Esophagus squamous epithelium (tissue), 5 donors: ENCODE measurements at regions of chr1 and their contacts with region 1.

Region 1: GRCh38 chr1:15741183-15741850 is 982 bp upstream of the TMEM82 start:
- DNase-seq: no peak
- H3K4me3 ChIP-seq: no peak overlapping the region
- H3K27ac ChIP-seq: peak overlapping the region in 2 of 4 donors; percentile 46 to 48
- H3K4me1 ChIP-seq: peaks cover 16 to 41% (median 18%) of the 10 kb centered on the region in 3 donors
- H3K27me3 ChIP-seq: no peaks in the 10 kb centered on the region
- CTCF ChIP-seq: peak; percentile 72 to 96 (median 93)
- POLR2A ChIP-seq: no peak

Region 2: DNA sequence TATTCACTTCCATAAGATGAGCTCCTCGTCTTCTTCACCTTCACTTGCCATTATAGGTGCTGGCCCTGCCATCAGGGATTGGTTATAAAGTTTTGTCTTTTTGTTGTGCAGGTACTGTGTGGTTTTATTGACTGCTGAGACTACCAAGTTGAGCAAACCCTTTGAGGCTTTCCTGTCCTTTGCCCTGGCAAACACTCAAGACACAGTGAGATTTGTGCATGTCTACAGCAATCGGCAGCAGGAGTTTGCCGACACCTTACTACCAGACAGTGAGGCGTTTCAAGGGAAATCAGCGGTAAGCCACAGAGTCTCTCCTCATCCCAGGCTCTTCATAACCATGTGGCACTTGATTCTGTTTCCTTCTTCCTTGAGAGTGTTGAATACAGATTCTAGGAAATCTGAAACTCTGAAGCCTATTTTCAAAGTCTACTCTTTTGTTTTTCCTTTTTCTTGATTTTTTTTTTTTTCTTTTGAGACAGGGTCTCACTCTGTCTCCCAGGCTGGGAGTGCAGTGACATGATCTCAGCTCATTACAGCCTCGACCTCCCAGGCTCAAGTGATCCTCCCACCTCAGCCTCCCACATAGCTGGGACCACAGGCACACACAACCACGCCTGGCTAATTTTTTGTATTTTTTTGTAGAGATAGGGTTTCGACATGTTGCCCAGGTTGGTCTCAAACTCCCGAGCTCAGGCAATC is 179.1 kb before region 1 on chr1:
- intact Hi-C with region 1: no loop called
- DNase-seq: no peak
- H3K4me3 ChIP-seq: no peak overlapping the region
- H3K27ac ChIP-seq: no peak overlapping the region
- H3K4me1 ChIP-seq: peaks cover 0 to 25% (median 0%) of the 10 kb centered on the region in 3 donors
- H3K27me3 ChIP-seq: no peaks in the 10 kb centered on the region
- CTCF ChIP-seq: no peak
- POLR2A ChIP-seq: no peak

Region 3: GRCh38 chr1:15598436-15598835 is 142.9 kb before region 1 on chr1:
- intact Hi-C with region 1: loop called (anchors 10 kb)
- DNase-seq: no peak
- H3K4me3 ChIP-seq: no peak overlapping the region
- H3K27ac ChIP-seq: no peak overlapping the region
- H3K4me1 ChIP-seq: peaks cover 0 to 25% (median 6%) of the 10 kb centered on the region in 3 donors
- H3K27me3 ChIP-seq: peaks cover 0 to 4% (median 0%) of the 10 kb centered on the region in 4 donors
- CTCF ChIP-seq: no peak
- POLR2A ChIP-seq: no peak